ENCODE measurements at regions of chr9 and their contacts with region 1.

Region 1: GRCh38 chr9:129900263-129901027 is 65.2 kb downstream of the USP20 start:
- DNase-seq: peak; percentile 78
- CTCF ChIP-seq: no peak

Region 2: GRCh38 chr9:129884220-129885017 is 16.0 kb before region 1 on chr9:
- CTCF ChIA-PET with region 1: interaction called, 23 read pairs
- POLR2A ChIA-PET with region 1: interaction called, 9 read pairs
- DNase-seq: peak; percentile 90
- CTCF ChIP-seq: no peak

Region 3: DNA sequence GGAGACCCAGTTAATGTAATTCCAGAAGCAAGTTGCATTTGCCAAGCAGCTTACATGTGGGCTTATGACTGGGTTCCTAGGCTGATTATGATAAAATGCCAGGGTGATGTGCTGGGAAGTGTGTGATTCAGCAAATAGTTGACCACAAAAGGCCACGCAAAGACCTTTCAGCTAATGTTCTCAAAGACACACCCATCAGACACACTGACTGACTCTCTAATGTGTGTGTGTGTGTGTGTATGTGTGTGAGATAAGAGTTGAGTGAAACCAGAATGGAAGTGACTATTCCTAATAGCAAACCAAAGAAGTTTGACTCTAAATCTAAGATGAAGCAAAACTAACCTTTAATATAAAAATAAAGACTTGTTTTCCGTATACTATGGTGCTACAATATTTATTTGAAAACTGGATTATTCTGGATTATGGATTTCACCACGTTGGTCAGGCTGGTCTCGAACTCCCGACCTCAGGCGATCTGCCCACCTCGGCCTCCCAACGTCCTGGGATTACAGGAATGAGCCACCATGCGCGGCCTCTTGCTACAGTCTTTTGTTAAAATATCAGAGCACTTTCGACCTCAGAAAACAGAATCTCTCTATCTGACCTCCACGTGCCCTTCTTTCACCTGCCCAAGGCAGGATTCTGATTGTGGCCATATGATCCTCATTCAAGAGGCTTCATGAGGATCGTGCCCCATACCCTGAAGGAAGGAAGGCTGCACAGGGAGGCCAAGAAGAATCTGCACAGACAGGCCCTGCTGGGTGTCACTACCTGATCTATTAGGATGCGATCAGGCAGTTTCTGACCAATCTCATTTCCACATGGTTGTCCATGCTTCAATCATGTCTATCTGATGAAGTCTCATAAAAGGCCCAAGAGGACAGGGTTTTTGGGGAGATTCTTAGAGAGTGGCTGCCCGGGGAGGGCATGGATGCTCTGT is 10.5 kb after region 1 on chr9:
- CTCF ChIA-PET with region 1: interaction called, 11 read pairs
- POLR2A ChIA-PET with region 1: no interaction called
- DNase-seq: no peak
- CTCF ChIP-seq: no peak

Region 4: DNA sequence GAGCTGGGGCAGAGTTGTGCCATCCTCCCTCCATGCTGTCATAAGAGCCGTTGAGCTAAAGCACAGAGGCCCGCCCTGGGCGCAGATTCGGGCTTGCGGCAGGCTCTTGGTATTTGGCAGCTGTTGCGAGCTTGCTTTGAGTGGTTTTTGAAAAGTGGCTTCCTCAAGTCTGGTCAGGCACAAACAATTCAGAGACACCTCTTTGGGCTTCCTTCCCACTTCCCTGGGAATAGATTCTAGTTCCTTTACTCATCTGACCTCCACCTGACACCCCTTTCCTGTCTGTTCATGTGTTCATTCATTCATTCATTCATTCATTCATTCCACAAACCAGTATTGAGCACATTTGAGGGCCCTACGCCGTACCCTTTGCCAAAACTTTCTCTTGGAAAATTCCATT is 299.2 kb after region 1 on chr9:
- CTCF ChIA-PET with region 1: no interaction called
- POLR2A ChIA-PET with region 1: no interaction called
- DNase-seq: no peak
- CTCF ChIP-seq: no peak

Measured in GM10248 (cell line).